B cell (primary cell): ENCODE measurements at regions of chr11 and their contacts with region 1.

Region 1: DNA sequence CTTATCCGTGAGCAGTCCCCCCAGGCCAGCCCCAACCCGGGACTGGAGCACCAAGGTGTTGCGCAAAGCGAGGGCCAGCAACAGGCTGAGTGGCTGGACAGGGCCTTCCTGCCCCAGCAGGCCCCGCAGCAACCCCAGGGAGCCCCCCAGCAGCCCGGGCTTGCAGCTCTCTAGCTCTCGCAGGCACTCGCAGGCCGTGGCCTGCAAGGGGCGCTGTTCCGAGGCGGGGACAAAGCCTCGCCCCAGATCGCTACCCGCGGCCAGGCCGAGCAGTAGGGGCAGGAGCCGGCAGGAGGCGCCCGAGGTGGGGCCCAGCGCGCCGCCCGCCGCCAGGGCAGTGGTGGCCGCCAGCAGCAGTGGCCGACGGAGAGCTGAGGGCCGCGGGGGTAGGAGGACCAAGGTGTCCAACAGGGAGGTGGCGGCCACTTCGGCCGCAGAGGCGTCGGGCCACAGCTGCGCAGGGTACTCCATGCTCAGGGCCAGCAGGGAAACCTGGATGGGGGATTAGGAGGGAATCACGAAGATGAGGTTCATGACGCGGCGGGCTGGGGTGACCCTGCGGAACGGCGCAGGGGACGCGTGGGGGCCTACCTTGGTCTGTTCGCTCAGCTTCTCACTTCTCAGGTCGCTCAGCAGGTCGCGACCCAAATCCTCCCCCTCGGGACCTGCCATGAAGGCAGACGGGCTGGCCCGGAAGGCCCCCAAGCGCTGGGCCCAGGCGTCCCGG is 762 bp downstream of the AP5B1 start:
- DNase-seq: peak; percentile 87
- ATAC-seq: peak; percentile 65
- H3K4me3 ChIP-seq: peak overlapping the region; percentile 42 to 81 (median 74)
- H3K4me3 Mint-ChIP-seq: peak overlapping the region; percentile 89
- H3K27ac ChIP-seq: peak overlapping the region; percentile 16 to 79
- H3K27ac Mint-ChIP-seq: peak overlapping the region; percentile 83
- H3K4me1 ChIP-seq: peaks cover 12 to 18% of the 10 kb centered on the region in 2 donors
- H3K4me1 Mint-ChIP-seq: peaks cover 15% of the 10 kb centered on the region
- H3K27me3 ChIP-seq: no peaks in the 10 kb centered on the region
- H3K27me3 Mint-ChIP-seq: no peaks in the 10 kb centered on the region
- CTCF ChIP-seq: peak; percentile 100

Region 2: GRCh38 chr11:65720237-65720934 is 59.6 kb before region 1 on chr11 and contains the start of gene RNASEH2C:
- CTCF ChIA-PET with region 1: interaction called, 6 read pairs
- POLR2A ChIA-PET with region 1: no interaction called
- intact Hi-C with region 1: loop called (anchors 2 kb)
- DNase-seq: peak; percentile 89
- ATAC-seq: peak; percentile 92
- H3K4me3 ChIP-seq: peak within 1 kb of the TSS; percentile 59 to 84 (median 74)
- H3K4me3 Mint-ChIP-seq: peak within 1 kb of the TSS; percentile 97
- H3K27ac ChIP-seq: peak within 1 kb of the TSS; percentile 59 to 73
- H3K27ac Mint-ChIP-seq: peak within 1 kb of the TSS; percentile 91
- H3K4me1 ChIP-seq: peaks cover 14 to 16% of the 10 kb centered on the region in 2 donors
- H3K4me1 Mint-ChIP-seq: peaks cover 35% of the 10 kb centered on the region
- H3K27me3 ChIP-seq: no peaks in the 10 kb centered on the region
- H3K27me3 Mint-ChIP-seq: no peaks in the 10 kb centered on the region
- CTCF ChIP-seq: no peak
- total RNA-seq, gene RNASEH2C: 75.3 and 81.6 TPM in 2 replicates

Region 3: GRCh38 chr11:65766535-65766934 is 13.5 kb before region 1 on chr11:
- CTCF ChIA-PET with region 1: interaction called, 26 read pairs
- POLR2A ChIA-PET with region 1: no interaction called
- intact Hi-C with region 1: no loop called
- DNase-seq: no peak
- ATAC-seq: no peak
- H3K4me3 ChIP-seq: no peak overlapping the region
- H3K4me3 Mint-ChIP-seq: no peak overlapping the region
- H3K27ac ChIP-seq: no peak overlapping the region
- H3K27ac Mint-ChIP-seq: no peak overlapping the region
- H3K4me1 ChIP-seq: peaks cover 0 to 4% of the 10 kb centered on the region in 2 donors
- H3K4me1 Mint-ChIP-seq: peaks cover 3% of the 10 kb centered on the region
- H3K27me3 ChIP-seq: no peaks in the 10 kb centered on the region
- H3K27me3 Mint-ChIP-seq: peaks cover under 1% of the 10 kb centered on the region
- CTCF ChIP-seq: no peak

Region 4: DNA sequence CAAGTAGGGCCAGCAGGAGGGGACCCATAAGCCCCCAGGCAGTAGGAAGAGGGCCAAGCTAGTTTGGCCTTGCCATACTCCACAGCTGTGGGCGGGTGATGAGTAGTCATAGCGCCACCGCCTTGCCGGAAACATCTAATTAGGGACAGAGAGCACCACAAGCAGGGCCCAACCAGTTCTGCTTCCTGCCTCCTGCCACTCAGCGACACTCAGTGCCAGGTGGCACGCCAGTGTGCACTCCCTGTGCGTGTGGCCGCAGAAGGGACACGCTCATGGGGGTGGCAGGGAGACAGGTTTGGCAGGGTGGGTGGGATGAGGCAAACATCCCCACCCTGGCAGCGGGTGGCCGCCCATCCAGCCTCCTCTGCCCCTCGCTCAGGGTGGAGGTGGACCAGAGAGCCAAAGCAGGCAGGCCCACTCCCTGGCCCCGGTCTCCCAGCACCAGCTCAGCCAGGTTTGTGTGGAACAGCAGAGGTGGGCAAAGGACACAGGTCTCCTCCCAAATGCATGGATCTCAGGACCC is 11.7 kb after region 1 on chr11:
- CTCF ChIA-PET with region 1: interaction called, 35 read pairs
- POLR2A ChIA-PET with region 1: interaction called, 9 read pairs
- intact Hi-C with region 1: loop called (anchors 1 kb)
- DNase-seq: no peak
- ATAC-seq: peak; percentile 94
- H3K4me3 ChIP-seq: no peak overlapping the region
- H3K4me3 Mint-ChIP-seq: peak overlapping the region; percentile 34
- H3K27ac ChIP-seq: peak overlapping the region in 1 of 2 donors; percentile 18
- H3K27ac Mint-ChIP-seq: peak overlapping the region; percentile 89
- H3K4me1 ChIP-seq: peaks cover 22 to 36% of the 10 kb centered on the region in 2 donors
- H3K4me1 Mint-ChIP-seq: peaks cover 42% of the 10 kb centered on the region
- H3K27me3 ChIP-seq: peaks cover 0 to 49% (median 22%) of the 10 kb centered on the region in 4 experiments
- H3K27me3 Mint-ChIP-seq: peaks cover 6% of the 10 kb centered on the region
- CTCF ChIP-seq: no peak

Region 5: GRCh38 chr11:65810046-65810868 is 30.2 kb after region 1 on chr11:
- CTCF ChIA-PET with region 1: interaction called, 90 read pairs
- POLR2A ChIA-PET with region 1: interaction called, 4 read pairs
- intact Hi-C with region 1: no loop called
- DNase-seq: peak; percentile 32
- ATAC-seq: peak; percentile 45
- H3K4me3 ChIP-seq: no peak overlapping the region
- H3K4me3 Mint-ChIP-seq: no peak overlapping the region
- H3K27ac ChIP-seq: no peak overlapping the region
- H3K27ac Mint-ChIP-seq: no peak overlapping the region
- H3K4me1 ChIP-seq: no peaks in the 10 kb centered on the region
- H3K4me1 Mint-ChIP-seq: no peaks in the 10 kb centered on the region
- H3K27me3 ChIP-seq: no peaks in the 10 kb centered on the region
- H3K27me3 Mint-ChIP-seq: peaks cover 4% of the 10 kb centered on the region
- CTCF ChIP-seq: no peak

Region 6: DNA sequence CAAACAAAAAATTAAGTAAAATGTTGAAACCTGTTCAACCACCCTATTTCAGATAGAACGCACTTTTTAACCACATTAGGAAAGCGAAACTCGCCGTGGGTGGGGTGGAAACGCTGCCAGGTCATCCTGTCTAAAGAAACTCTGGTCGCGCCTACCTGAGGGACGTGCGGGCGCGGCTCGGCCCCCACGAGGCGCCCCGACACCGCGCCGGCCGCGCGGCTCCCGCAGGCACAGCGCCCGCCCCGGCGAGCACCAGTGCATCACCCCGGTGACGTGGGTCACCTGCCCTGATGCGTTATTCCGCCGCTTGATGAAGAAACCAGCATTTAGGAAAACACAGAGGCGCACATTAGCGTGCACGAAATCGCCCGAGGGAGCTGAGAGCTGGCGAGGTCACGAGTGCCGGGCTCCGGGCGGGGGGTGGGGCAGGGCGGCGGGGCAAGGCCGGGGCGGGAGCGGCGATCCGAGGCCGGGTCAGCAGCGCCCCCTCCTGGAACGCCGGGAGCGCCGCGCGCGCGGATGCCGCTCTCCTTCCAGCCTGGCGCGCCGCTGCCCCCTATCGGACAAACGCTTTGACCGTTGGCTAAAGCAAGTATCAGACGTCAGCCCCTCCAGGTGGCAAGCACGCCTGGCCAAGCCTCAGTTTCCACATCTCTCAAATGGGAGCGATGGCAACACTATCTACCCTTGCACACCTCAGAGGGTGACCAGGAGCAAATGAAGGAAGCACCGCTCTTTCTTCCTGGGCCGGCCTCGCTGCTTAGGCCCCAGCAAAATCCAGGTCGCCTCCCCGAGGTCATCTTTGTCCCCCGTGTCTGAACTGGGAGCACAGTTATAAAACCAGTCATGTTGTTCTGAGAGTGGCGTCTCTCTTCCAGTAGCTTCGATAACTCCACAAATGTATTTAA is 38.1 kb after region 1 on chr11:
- CTCF ChIA-PET with region 1: interaction called, 90 read pairs
- POLR2A ChIA-PET with region 1: interaction called, 6 read pairs
- intact Hi-C with region 1: loop called (anchors 1 kb)
- DNase-seq: peak; percentile 95
- ATAC-seq: peak; percentile 98
- H3K4me3 ChIP-seq: peak overlapping the region; percentile 43 to 66 (median 52)
- H3K4me3 Mint-ChIP-seq: peak overlapping the region; percentile 74
- H3K27ac ChIP-seq: peak overlapping the region; percentile 54 to 66
- H3K27ac Mint-ChIP-seq: peak overlapping the region; percentile 75
- H3K4me1 ChIP-seq: peaks cover 6 to 13% of the 10 kb centered on the region in 2 donors
- H3K4me1 Mint-ChIP-seq: peaks cover 9% of the 10 kb centered on the region
- H3K27me3 ChIP-seq: no peaks in the 10 kb centered on the region
- H3K27me3 Mint-ChIP-seq: no peaks in the 10 kb centered on the region
- CTCF ChIP-seq: peak; percentile 100

Region 7: DNA sequence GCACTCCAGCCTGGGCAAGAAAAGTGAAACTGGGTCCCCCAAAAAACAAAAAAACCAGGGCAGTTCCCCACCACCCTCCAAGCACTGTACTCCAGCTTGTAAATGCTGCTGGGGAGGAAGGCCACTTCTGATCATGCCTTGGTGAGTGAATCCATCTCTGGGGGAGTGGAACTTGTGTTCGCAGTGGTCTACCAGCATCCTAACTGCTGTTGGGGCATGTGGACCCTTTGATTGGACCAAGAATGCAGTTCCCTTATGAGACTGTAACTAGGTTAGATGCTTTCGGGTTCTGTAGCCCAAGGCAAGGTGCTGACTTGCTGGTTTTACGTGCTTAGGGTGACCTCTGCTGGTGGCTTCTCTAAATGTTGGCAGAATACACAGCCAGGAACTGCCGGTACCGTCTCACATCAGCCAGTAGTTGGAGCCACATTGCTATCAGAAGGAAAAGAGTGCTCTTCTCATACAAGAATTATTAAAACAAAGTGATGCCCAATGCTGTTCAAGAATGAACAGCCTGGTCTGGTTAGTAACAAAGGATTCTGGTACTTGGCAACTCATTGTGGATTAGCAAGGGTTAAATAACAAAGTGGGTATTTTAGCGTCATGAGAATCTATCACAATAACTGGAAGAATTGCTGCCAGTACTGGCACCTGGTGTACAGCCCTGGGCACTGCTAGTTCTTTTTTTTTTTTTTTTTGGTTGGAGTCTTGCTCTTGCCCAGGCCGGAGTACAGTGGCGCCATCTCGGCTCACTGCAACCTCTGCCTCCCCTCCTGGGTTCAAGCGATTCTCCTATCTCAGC is 209.0 kb after region 1 on chr11:
- CTCF ChIA-PET with region 1: interaction called, 28 read pairs
- POLR2A ChIA-PET with region 1: no interaction called
- intact Hi-C with region 1: loop called (anchors 1 kb)
- DNase-seq: peak; percentile 96
- ATAC-seq: peak; percentile 99
- H3K4me3 ChIP-seq: no peak overlapping the region
- H3K4me3 Mint-ChIP-seq: no peak overlapping the region
- H3K27ac ChIP-seq: no peak overlapping the region
- H3K27ac Mint-ChIP-seq: peak overlapping the region; percentile 84
- H3K4me1 ChIP-seq: peaks cover 3 to 7% of the 10 kb centered on the region in 2 donors
- H3K4me1 Mint-ChIP-seq: peaks cover 5% of the 10 kb centered on the region
- H3K27me3 ChIP-seq: no peaks in the 10 kb centered on the region
- H3K27me3 Mint-ChIP-seq: no peaks in the 10 kb centered on the region
- CTCF ChIP-seq: peak; percentile 99

Region 8: GRCh38 chr11:66011239-66011784 is 231.3 kb after region 1 on chr11:
- CTCF ChIA-PET with region 1: no interaction called
- POLR2A ChIA-PET with region 1: no interaction called
- intact Hi-C with region 1: no loop called
- DNase-seq: no peak
- ATAC-seq: no peak
- H3K4me3 ChIP-seq: peak overlapping the region in 1 of 5 experiments; percentile 20
- H3K4me3 Mint-ChIP-seq: no peak overlapping the region
- H3K27ac ChIP-seq: no peak overlapping the region
- H3K27ac Mint-ChIP-seq: no peak overlapping the region
- H3K4me1 ChIP-seq: peaks cover 11 to 13% of the 10 kb centered on the region in 2 donors
- H3K4me1 Mint-ChIP-seq: peaks cover 2% of the 10 kb centered on the region
- H3K27me3 ChIP-seq: peaks cover 0 to 29% (median 12%) of the 10 kb centered on the region in 4 experiments
- H3K27me3 Mint-ChIP-seq: peaks cover 8% of the 10 kb centered on the region
- CTCF ChIP-seq: no peak